Keratinocyte (primary cell): ENCODE measurements at regions of chr2 and their contacts with region 1.

Region 1: GRCh38 chr2:74864846-74865722 is 31.2 kb downstream of the HK2 start:
- DNase-seq: no peak
- H3K4me3 ChIP-seq: no peak overlapping the region
- H3K27ac ChIP-seq: no peak overlapping the region
- H3K4me1 ChIP-seq: peaks cover 7% of the 10 kb centered on the region
- H3K27me3 ChIP-seq: no peaks in the 10 kb centered on the region
- CTCF ChIP-seq: peak in 1 of 3 experiments; percentile 12

Region 2: DNA sequence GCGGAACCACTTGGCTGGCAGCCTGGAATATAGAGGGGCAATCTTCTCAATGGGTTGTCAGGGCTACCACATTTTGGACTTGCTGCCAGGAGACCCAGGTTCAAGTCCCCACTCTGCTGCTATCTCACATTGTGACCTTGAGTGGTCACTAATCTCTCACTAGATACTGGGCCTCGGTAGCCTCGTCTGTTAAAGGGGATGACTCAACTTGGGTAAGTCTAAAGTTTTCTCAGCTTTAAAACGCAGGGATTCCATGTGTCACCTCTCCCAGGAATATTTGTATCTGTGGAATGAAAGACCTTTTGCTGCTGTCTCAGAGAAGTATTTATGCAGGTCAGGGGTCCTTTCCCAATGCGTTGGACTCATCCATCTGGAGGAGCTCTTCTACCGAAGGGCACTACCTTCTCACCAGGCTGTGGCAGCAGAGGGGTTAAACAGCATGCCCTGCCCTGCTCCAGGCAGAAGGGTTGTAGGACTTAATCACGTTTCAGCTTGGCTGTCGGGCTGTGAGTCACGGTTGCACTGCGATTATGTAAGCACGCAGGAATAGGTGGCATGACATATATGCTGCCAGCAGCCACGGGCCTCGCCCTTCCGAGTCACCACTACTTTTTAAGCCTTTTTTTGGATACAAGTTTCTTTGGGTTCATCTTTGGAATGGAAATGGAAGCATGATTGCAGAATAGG is 124.6 kb before region 1 on chr2:
- dilution Hi-C with region 1: loop called (anchors 25 kb)
- DNase-seq: peak; percentile 90
- H3K4me3 ChIP-seq: peak overlapping the region in 1 of 3 experiments; percentile 7
- H3K27ac ChIP-seq: peak overlapping the region; percentile 96
- H3K4me1 ChIP-seq: peaks cover 35% of the 10 kb centered on the region
- H3K27me3 ChIP-seq: no peaks in the 10 kb centered on the region
- CTCF ChIP-seq: peak in 2 of 3 experiments; percentile 26 to 53

Region 3: GRCh38 chr2:74919827-74920226 is 54.7 kb after region 1 on chr2:
- dilution Hi-C with region 1: no loop called
- DNase-seq: no peak
- H3K4me3 ChIP-seq: peak overlapping the region; percentile 25 to 53 (median 46)
- H3K27ac ChIP-seq: no peak overlapping the region
- H3K4me1 ChIP-seq: peaks cover 10% of the 10 kb centered on the region
- H3K27me3 ChIP-seq: no peaks in the 10 kb centered on the region
- CTCF ChIP-seq: peak; percentile 58 to 86 (median 82)

Region 4: DNA sequence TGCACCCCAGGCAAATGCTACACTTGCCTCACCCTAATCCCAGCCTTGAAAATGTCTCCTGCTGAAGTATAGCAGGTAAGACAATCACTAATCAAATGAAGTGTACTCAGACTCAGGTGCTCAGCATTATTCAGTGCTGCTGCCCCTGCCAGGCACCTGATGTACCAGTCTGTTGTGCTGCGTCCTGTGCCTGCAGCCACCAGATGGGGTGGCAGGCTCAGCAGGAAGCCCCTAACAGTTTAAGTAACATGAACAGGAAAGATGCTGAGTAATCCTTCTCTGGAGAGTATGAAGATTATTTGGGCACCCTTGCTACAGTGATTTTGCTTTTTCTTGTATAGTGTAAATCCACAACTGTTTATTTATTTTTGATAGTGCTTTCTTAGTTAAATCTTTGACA is 265.1 kb after region 1 on chr2:
- dilution Hi-C with region 1: no loop called
- DNase-seq: no peak
- H3K4me3 ChIP-seq: no peak overlapping the region
- H3K27ac ChIP-seq: no peak overlapping the region
- H3K4me1 ChIP-seq: no peaks in the 10 kb centered on the region
- H3K27me3 ChIP-seq: no peaks in the 10 kb centered on the region
- CTCF ChIP-seq: peak in 1 of 3 experiments; percentile 21

Region 5: GRCh38 chr2:75389271-75389670 is 524.2 kb after region 1 on chr2:
- dilution Hi-C with region 1: no loop called
- DNase-seq: no peak
- H3K4me3 ChIP-seq: no peak overlapping the region
- H3K27ac ChIP-seq: no peak overlapping the region
- H3K4me1 ChIP-seq: peaks cover under 1% of the 10 kb centered on the region
- H3K27me3 ChIP-seq: no peaks in the 10 kb centered on the region
- CTCF ChIP-seq: no peak